Transverse colon (tissue), 4 donors: ENCODE measurements at regions of chr9 and their contacts with region 1.

Region 1: GRCh38 chr9:81689343-81690190 is at the start of gene TLE1:
- DNase-seq: peak; percentile 99
- H3K4me3 ChIP-seq: peak within 1 kb of the TSS; percentile 60 to 92 (median 74)
- H3K27ac ChIP-seq: peak within 1 kb of the TSS; percentile 89 to 95 (median 93)
- H3K4me1 ChIP-seq: peaks cover 11 to 34% (median 30%) of the 10 kb centered on the region in 4 donors
- H3K27me3 ChIP-seq: no peaks in the 10 kb centered on the region
- CTCF ChIP-seq: no peak
- EP300 ChIP-seq: peak; percentile 2
- POLR2A ChIP-seq: peak; percentile 77
- total RNA-seq, gene TLE1: 51.5 to 77.3 (median 62.2) TPM

Region 2: GRCh38 chr9:80797831-80798688 is 891.5 kb before region 1 on chr9:
- in situ Hi-C with region 1: no loop called
- intact Hi-C with region 1: loop called (anchors 5 kb)
- DNase-seq: peak; percentile 15
- H3K4me3 ChIP-seq: no peak overlapping the region
- H3K27ac ChIP-seq: peak overlapping the region; percentile 40 to 82 (median 75)
- H3K4me1 ChIP-seq: peaks cover 0 to 20% (median 6%) of the 10 kb centered on the region in 4 donors
- H3K27me3 ChIP-seq: no peaks in the 10 kb centered on the region
- CTCF ChIP-seq: no peak
- EP300 ChIP-seq: peak; percentile 31
- POLR2A ChIP-seq: no peak

Region 3: DNA sequence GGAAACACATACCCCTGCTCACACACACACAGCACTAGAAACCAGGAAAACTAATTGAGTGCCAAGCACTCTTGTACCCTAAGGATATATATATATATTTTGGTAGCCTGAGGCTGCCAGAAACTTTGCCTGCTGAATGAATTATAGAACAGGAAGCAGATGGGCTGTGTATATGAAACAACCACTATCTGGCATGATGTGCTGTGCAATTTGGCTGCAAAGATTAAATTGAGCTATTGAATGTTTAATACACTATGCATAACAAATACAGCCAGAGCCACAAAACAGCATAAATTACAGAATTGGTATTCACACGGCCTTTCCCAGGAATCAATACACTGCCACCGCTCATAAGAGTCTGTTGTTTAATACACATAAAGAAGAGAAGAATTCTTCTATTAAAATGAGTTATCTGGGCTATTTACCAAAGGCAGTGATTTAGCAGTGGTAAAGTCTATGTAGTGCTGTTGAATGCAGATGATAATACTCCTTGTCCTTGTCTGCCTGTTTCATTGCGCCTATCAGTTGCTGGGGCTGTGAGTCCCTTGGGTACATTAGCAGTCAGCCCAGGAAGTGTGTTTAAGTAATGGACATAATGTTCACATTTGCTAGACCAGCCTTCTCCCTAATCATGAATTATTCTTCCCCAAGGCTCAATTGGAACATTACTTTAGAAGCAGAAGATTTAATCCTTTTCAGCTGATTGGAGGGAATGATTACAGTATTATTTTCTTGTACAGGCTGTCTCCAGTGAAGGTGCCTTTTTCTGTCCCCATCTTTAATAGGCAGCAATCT is 294.5 kb before region 1 on chr9:
- in situ Hi-C with region 1: no loop called
- intact Hi-C with region 1: loop called (anchors 10 kb)
- DNase-seq: no peak
- H3K4me3 ChIP-seq: no peak overlapping the region
- H3K27ac ChIP-seq: peak overlapping the region; percentile 43 to 64 (median 48)
- H3K4me1 ChIP-seq: peaks cover 0 to 27% (median 0%) of the 10 kb centered on the region in 4 donors
- H3K27me3 ChIP-seq: no peaks in the 10 kb centered on the region
- CTCF ChIP-seq: no peak
- EP300 ChIP-seq: no peak
- POLR2A ChIP-seq: no peak

Region 4: GRCh38 chr9:81477669-81478068 is 211.9 kb before region 1 on chr9:
- in situ Hi-C with region 1: no loop called
- intact Hi-C with region 1: no loop called
- DNase-seq: no peak
- H3K4me3 ChIP-seq: no peak overlapping the region
- H3K27ac ChIP-seq: no peak overlapping the region
- H3K4me1 ChIP-seq: peaks cover 0 to 11% (median 5%) of the 10 kb centered on the region in 4 donors
- H3K27me3 ChIP-seq: no peaks in the 10 kb centered on the region
- CTCF ChIP-seq: no peak
- EP300 ChIP-seq: no peak
- POLR2A ChIP-seq: no peak

Region 5: GRCh38 chr9:81529556-81530195 is 159.9 kb before region 1 on chr9:
- in situ Hi-C with region 1: no loop called
- intact Hi-C with region 1: loop called (anchors 10 kb)
- DNase-seq: no peak
- H3K4me3 ChIP-seq: no peak overlapping the region
- H3K27ac ChIP-seq: peak overlapping the region in 1 of 4 donors; percentile 22
- H3K4me1 ChIP-seq: peaks cover 0 to 12% (median 0%) of the 10 kb centered on the region in 4 donors
- H3K27me3 ChIP-seq: no peaks in the 10 kb centered on the region
- CTCF ChIP-seq: no peak
- EP300 ChIP-seq: no peak
- POLR2A ChIP-seq: no peak

Region 6: DNA sequence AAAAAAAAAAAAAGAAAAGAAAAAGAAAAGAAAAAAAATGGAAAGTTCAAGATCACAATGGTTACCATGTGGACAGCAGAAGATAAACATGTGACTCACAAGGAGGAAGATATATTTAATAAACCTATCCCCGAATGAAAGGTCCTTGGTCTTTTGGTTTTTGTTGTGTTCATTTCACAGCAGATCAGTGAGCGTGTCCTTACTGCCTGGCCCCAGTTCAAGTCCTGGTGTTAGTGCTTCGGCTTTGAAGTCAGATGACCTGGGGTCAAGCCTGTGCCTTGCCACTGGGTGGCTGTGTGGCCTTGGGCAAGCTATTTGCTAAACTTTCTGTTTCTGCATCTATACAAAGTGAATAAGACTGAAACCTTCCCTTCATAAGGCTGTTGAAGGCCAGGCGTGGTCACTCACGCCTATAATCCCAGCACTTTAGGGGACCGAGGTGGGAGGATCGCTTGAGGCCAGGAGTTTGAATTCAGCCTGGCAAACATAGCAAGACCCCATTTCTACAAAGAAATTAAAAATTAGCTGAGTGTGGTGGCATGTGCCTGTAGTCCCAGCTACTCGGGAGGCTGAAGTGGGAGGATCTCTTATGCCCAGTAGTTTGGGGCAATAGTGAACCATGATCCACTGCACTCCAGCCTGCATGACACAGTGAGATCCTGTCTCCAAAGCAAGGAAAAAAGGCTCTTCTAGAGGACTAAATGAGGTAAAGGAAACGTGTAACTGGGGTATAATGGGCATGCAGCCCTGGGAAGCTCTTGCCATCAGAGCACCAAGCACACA is 144.2 kb after region 1 on chr9:
- in situ Hi-C with region 1: no loop called
- intact Hi-C with region 1: loop called (anchors 5 kb)
- DNase-seq: no peak
- H3K4me3 ChIP-seq: no peak overlapping the region
- H3K27ac ChIP-seq: peak overlapping the region; percentile 52 to 66 (median 62)
- H3K4me1 ChIP-seq: peaks cover 0 to 7% (median 5%) of the 10 kb centered on the region in 4 donors
- H3K27me3 ChIP-seq: no peaks in the 10 kb centered on the region
- CTCF ChIP-seq: no peak
- EP300 ChIP-seq: no peak
- POLR2A ChIP-seq: no peak

Region 7: DNA sequence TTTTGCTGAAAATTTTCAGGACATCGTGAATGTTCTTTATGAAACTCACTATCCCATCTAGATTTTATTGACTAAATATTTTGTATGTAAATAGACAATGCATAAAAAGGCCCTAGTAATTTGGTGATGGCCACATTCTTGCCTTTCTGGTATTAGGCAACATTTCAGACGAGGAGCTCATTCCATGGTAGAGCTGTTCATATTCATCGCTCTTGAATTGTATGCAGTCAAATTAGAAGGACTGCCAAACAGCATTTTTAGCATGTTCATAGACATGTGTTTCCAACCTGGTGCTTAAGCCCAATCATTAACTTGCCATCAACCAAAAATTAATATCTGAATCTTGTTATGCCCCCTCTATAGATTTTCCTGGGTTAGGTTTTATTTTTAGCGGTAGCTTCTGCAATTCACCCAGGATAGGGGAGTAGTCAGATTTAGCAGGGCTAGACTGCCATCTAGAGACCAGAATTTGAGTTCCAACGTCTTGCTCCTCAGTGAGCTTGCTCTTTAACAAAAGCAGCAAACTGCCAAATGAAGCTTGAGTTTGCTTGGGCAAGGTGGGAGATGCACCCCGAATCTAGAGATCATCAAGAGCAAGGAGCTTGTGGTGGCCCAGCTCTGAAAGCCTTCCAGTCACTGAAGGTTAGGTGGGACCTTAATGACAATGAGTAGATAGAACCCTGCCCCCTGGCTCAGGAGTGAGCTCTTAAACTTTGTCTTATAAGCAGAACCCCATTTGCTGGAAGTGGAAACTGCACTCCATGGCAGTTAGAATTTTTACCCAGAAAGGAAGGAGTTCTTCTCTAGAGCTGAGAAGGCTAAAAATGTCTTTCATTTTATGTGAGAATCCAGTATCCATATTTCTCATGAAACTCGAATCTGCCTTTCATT is 917.2 kb after region 1 on chr9:
- in situ Hi-C with region 1: loop called in 2 of 4 experiments (anchors 25 kb)
- intact Hi-C with region 1: no loop called
- DNase-seq: peak; percentile 47
- H3K4me3 ChIP-seq: no peak overlapping the region
- H3K27ac ChIP-seq: no peak overlapping the region
- H3K4me1 ChIP-seq: peaks cover 0 to 25% (median 2%) of the 10 kb centered on the region in 4 donors
- H3K27me3 ChIP-seq: no peaks in the 10 kb centered on the region
- CTCF ChIP-seq: peak; percentile 52 to 66 (median 61)
- EP300 ChIP-seq: no peak
- POLR2A ChIP-seq: no peak